Left colon (tissue), 2 donors: ENCODE measurements at regions of chr3 and their contacts with region 1.

Region 1: GRCh38 chr3:11651900-11652299 is 8.2 kb upstream of the VGLL4 start:
- DNase-seq: no peak
- ATAC-seq: no peak

Region 2: GRCh38 chr3:11379233-11379823 is 272.6 kb before region 1 on chr3:
- intact Hi-C with region 1: loop called in 1 of 2 experiments (anchors 2 kb)
- DNase-seq: no peak
- ATAC-seq: peak; percentile 80

Region 3: GRCh38 chr3:11392014-11392859 is 259.7 kb before region 1 on chr3:
- intact Hi-C with region 1: loop called in 1 of 2 experiments (anchors 5 kb)
- DNase-seq: no peak
- ATAC-seq: no peak

Region 4: GRCh38 chr3:11705049-11705448 is 53.1 kb after region 1 on chr3:
- intact Hi-C with region 1: no loop called
- DNase-seq: no peak
- ATAC-seq: no peak

Region 5: GRCh38 chr3:11735638-11736037 is 83.7 kb after region 1 on chr3:
- intact Hi-C with region 1: no loop called
- DNase-seq: peak in 1 of 2 donors; percentile 28
- ATAC-seq: peak; percentile 67

Region 6: DNA sequence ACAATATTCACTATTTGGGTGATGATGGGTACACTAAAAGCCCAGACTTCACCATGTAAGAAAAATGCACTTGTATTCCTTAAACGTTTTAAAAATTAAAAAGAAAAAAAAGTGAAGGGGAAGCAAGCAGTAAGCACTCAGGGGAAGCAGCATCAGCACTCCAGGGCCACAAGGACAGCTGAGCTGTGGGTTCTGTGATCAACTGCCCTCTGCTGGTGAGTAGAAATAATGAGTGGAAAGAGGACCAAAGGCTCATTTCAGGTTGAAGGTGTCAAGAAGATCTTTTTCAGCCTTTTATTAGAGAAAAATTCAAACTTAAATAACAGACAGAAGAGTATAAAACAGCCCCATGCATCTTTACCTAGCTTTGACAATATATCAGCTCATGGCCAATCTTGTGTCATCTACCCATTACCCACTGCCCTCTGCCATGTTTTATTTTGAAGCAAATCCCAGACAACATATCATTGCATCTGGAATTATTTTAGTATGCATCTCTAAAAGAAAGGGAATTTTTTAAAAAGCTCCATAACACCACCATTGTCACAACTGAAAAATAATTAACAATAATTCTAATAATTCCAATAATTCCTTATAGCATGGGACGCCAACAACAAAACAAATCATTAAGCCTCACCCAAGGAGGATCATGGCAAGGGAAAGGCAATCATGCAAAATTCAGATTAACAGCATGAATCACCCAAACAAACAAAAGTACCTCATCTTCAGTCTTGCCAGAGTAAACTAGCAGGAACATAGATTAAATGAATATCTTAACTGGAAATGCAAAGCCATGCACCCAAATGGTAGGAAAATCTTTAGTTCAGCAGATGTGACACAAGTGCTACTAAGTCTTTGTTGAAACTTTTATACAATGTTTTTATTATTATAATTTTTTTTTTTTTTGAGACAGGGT is 152.3 kb after region 1 on chr3:
- intact Hi-C with region 1: no loop called
- DNase-seq: peak; percentile 27 to 32
- ATAC-seq: peak; percentile 87